ENCODE measurements at regions of chr11 and their contacts with region 1.

Region 1: DNA sequence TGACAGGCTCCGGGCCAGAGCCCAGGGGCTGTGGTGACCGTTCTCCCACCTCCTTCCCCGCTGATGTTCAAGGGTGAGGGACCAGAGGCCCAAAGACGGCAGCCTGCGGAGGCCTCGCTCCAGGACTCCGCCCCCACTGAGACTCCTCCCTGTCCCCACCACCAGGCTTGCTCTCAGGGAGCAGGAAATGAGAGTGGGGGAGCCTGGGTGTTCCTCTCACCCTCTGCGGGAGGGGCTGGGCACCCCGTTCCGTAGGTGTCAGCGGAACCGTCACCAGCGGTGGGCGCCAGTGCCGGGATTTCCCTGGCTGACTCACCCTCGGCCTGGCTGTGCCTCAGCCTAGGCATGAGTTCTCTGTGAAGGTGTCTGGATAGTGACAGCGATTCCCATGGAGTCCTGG is 15.7 kb downstream of the DAGLA start:
- H3K4me3 Mint-ChIP-seq: peak overlapping the region; percentile 71
- H3K27ac Mint-ChIP-seq: peak overlapping the region; percentile 94
- H3K4me1 Mint-ChIP-seq: peaks cover 76% of the 10 kb centered on the region
- H3K27me3 Mint-ChIP-seq: no peaks in the 10 kb centered on the region

Region 2: DNA sequence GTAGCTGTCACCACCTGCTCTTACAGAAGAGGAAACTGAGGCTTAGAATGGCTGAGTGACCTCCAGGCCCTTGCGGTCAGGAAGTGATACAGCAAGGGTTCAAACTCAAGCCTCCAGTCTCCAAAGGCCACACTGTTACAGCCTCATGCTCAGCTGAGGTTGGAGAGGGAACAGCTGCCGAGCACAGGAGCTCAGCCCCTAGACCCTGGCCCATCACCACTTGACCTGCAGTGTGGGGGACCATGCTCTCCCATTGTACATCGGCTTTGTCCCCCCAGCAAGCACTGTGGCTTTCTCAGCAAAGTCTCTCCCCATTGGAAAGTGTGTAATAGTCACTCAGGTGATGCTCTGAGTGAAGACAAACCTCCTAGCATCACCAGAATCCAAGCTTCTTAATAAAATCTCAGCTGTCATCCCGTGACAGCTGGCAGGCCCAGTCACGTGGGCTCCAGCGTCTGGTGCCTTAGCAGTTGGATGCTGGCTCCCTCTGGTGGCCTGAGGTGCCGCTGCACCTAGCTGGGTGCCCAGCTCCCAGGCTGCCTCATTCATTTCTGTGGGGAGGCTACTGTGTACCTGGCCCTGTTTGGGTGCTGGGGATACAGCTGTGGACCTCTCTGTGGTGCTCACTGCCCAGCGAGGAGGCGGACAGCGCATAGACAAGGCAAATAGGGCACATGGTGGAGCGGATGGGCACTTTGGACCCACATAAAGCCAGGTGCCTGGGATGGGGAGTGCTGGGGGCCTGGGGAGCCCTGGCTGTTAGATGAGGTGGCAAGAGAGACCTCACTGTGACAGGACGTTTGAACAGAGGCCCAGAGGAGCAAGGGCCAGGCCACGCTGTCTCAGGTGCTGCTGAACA is 37.4 kb after region 1 on chr11:
- intact Hi-C with region 1: loop called (anchors 5 kb)
- H3K4me3 Mint-ChIP-seq: no peak overlapping the region
- H3K27ac Mint-ChIP-seq: peak overlapping the region; percentile 81
- H3K4me1 Mint-ChIP-seq: peaks cover 33% of the 10 kb centered on the region
- H3K27me3 Mint-ChIP-seq: no peaks in the 10 kb centered on the region

Measured in dendritic cell treated with granulocyte-macrophage colony-stimulating factor and Interleukin-4, amounts not matched to agents 40 ng/mL and 50 ng/mL, for 4 days (primary cell).